Activated CD8-positive, alpha-beta memory T cell treated with anti-CD3 and anti-CD28 coated beads, Interleukin-2, amount 10 ng/mL, durations not matched to agents 7 days and 5 days (primary cell): ENCODE measurements at regions of chr2 and their contacts with region 1.

Region 1: GRCh38 chr2:28621172-28622100 is 125.6 kb downstream of the PLB1 start:
- DNase-seq: peak; percentile 84
- ATAC-seq: peak; percentile 88
- H3K4me3 Mint-ChIP-seq: peak overlapping the region; percentile 36
- H3K27ac Mint-ChIP-seq: peak overlapping the region; percentile 96
- H3K4me1 Mint-ChIP-seq: peaks cover 82% of the 10 kb centered on the region
- H3K27me3 Mint-ChIP-seq: no peaks in the 10 kb centered on the region

Region 2: GRCh38 chr2:28751252-28751955 is 130.0 kb after region 1 on chr2 and contains the start of gene PPP1CB:
- CTCF ChIA-PET with region 1: interaction called, 14 read pairs
- DNase-seq: peak; percentile 95
- ATAC-seq: peak; percentile 86
- H3K4me3 Mint-ChIP-seq: peak within 1 kb of the TSS; percentile 91
- H3K27ac Mint-ChIP-seq: peak within 1 kb of the TSS; percentile 97
- H3K4me1 Mint-ChIP-seq: peaks cover 55% of the 10 kb centered on the region
- H3K27me3 Mint-ChIP-seq: no peaks in the 10 kb centered on the region
- total RNA-seq, gene PPP1CB: 153 to 218 TPM

Region 3: GRCh38 chr2:28880193-28880592 is 258.8 kb after region 1 on chr2:
- CTCF ChIA-PET with region 1: no interaction called
- DNase-seq: no peak
- ATAC-seq: no peak
- H3K4me3 Mint-ChIP-seq: no peak overlapping the region
- H3K27ac Mint-ChIP-seq: no peak overlapping the region
- H3K4me1 Mint-ChIP-seq: no peaks in the 10 kb centered on the region
- H3K27me3 Mint-ChIP-seq: peaks cover 35% of the 10 kb centered on the region